K562 (cell line): ENCODE measurements at regions of chr20 and their contacts with region 1.

Region 1: DNA sequence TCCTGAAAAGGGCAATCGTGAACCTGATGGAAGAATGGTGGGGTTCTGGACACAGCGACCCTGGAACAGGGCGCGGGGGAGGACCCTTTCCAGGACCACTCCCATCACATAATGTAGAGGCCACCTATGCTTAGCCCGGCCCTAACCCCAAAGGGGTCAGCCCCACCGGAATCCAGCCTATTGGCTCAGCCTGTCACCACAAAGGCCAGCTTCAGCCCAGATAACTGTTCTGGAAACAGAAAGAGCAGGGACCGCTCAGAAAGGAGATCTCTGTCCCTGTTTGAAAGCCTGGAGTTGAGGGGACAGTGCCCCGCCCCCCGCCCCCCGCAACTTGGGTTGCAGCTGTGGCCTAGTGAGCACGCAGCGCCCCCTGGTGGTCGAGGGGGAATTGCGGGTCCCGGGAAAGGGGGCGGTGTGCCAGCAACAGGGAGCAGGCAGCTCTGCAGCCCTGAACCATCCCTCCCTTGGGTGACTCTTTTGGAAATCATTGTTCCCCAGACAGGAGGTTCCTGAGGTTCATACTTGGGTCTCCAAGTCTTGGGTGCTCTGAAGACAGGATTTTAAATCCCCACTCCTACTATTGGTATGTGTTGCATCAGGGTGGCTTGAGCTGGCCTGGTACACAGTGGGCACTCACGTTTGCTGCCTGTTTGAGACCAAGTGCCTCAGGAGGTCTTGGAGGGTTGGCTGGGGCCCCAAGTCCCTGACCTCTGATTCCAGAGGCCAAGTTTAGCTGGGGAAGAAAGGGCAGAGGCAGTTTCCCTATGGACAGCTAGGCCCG is 1.5 kb downstream of the SIGLEC1 start:
- DNase-seq: peak; percentile 73 to 82 (median 80)
- ATAC-seq: peak; percentile 86
- H3K4me3 ChIP-seq: no peak overlapping the region
- H3K27ac ChIP-seq: no peak overlapping the region
- H3K4me1 ChIP-seq: peaks cover 0 to 18% of the 10 kb centered on the region in 2 experiments; a peak in 2 of 5 replicates
- H3K27me3 ChIP-seq: no peaks in the 10 kb centered on the region
- CTCF ChIP-seq: peak; percentile 81 to 94 (median 83)
- EP300 ChIP-seq: no peak
- POLR2A ChIP-seq: no peak
- RAD21 ChIP-seq: peak; percentile 71 to 76

Region 2: DNA sequence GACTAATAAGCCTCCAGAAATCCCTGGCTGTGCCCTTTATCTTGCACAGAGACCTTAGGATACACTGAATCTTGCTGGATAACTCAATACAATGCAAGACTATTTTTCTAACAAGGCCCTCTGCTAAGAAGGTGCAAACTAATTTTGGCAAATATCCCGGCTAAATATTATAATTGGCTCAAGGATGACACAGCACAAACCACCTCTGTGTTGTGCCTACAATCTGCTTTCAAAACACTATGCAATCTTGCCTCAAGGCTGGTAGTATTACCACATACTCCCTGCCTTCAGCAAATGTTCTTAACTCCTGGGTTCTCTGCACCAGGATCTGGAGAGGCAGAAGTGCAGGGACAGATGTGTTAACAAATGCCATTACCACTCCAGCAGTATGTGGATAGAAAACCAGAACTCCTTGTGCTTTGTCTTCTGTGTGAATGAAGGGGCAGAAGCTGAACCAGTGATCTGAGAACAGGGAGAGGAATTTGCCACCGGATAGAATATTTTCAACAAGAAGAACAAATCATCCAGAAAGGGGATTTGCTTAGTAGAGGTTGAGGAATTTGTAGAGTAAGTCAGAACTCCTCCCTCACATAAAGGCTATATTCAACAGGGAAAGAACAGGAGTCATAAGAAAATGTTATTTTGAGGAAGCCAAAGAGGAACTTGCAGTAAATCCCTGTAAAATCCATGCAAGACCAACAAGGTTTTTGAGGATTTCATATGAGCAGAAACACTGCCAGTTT is 397.8 kb before region 1 on chr20:
- CTCF ChIA-PET with region 1: no interaction called
- POLR2A ChIA-PET with region 1: no interaction called
- in situ Hi-C with region 1: no loop called
- intact Hi-C with region 1: no loop called
- DNase-seq: no peak
- ATAC-seq: peak; percentile 54; the same call in 1 of the 3 replicates
- H3K4me3 ChIP-seq: no peak overlapping the region
- H3K27ac ChIP-seq: no peak overlapping the region
- H3K4me1 ChIP-seq: peaks cover 0 to 5% of the 10 kb centered on the region in 2 experiments; a peak in 3 of 5 replicates
- H3K27me3 ChIP-seq: no peaks in the 10 kb centered on the region
- CTCF ChIP-seq: no peak
- EP300 ChIP-seq: no peak
- POLR2A ChIP-seq: no peak
- RAD21 ChIP-seq: no peak

Region 3: DNA sequence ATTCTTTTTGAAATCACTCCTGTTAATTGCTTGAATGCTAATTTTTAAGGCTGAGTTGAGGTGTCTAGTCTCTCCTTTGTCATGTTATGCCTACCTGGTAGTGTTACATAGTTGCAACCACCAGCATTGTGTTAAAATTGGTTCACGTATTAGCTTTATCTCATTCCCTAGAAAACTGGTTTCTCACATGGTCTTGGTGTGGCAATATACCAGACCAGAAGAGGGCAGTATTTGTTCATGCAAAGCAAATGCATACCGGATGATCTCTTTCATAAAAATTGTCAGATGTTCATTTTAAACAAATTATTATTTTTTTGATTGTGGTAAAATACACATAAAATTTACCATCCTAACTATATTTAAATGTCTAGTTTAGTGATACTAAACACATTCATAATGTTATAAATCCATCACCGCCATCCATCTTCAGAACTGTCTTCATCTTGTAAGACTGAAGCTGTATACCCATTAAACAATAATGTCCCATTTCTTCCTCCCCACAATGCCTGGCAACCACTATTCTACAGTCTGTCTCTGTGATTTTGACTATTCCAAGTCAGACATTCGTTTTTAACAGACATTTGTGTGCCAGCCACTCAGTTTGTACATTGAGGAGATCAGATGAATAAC is 147.2 kb before region 1 on chr20:
- CTCF ChIA-PET with region 1: interaction called, 3 read pairs
- POLR2A ChIA-PET with region 1: no interaction called
- in situ Hi-C with region 1: loop called (anchors 5 kb)
- intact Hi-C with region 1: loop called (anchors 1 kb)
- DNase-seq: peak; percentile 15 to 50 (median 28)
- ATAC-seq: peak; percentile 73
- H3K4me3 ChIP-seq: no peak overlapping the region
- H3K27ac ChIP-seq: no peak overlapping the region
- H3K4me1 ChIP-seq: no peaks in the 10 kb centered on the region
- H3K27me3 ChIP-seq: no peaks in the 10 kb centered on the region
- CTCF ChIP-seq: peak; percentile 50 to 78 (median 56); a peak in 5 of 6 replicates
- EP300 ChIP-seq: no peak
- POLR2A ChIP-seq: no peak
- RAD21 ChIP-seq: peak; percentile 59 to 75

Region 4: DNA sequence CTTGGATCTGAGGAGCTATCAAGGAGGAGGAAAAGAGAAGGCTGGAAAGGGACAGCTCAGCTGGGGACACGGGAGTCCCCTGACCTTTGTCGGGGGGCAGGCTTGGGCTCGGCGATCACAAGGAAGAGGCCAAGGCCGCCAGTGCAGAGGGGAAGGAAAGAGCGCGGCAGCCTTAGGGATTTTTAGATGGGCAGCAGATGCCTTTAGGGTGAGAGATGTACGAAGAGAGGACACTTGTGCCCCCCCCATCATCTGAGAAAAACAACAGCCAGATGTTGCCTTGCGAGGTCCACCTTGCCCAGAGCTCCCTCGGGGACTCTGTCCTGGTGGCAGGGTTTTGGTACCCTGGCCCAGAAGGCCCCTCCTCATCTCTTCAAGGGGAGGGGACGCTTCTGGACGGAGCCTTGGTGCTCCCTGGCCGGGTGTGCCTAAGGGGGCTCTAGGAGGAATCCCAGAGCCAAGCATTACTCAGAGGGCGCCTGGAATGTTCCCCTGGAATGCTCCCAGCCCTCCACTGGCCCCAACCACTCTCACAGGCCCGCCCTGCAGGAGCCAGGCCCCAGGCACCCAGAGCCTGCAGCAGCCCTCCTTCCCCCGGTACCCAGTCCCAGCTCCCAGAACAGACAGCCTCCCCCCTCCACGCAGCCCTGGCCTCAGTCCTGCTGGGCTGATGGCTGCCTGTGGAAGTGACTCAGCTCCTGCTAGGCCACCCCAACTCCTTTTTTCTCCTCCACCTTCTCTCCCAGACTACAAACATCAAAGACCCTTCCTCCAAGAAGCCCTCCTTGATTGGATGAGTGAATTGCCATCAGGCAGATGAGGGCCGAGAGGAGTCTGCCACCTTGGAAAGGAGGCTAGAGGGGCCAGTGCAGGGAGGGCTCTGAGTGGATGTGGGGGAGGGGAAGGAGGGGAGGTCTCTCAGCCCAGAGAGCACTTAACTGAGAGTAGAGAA is 30.9 kb before region 1 on chr20:
- CTCF ChIA-PET with region 1: interaction called, 12 read pairs
- POLR2A ChIA-PET with region 1: interaction called, 4 read pairs
- in situ Hi-C with region 1: no loop called
- intact Hi-C with region 1: loop called (anchors 1 kb)
- DNase-seq: no peak
- ATAC-seq: no peak
- H3K4me3 ChIP-seq: no peak overlapping the region
- H3K27ac ChIP-seq: no peak overlapping the region
- H3K4me1 ChIP-seq: peaks cover 0 to 30% of the 10 kb centered on the region in 2 experiments; a peak in 2 of 5 replicates
- H3K27me3 ChIP-seq: peaks cover 0 to 6% of the 10 kb centered on the region in 2 experiments; a peak in 2 of 5 replicates
- CTCF ChIP-seq: no peak
- EP300 ChIP-seq: no peak
- POLR2A ChIP-seq: no peak
- RAD21 ChIP-seq: no peak

Region 5: DNA sequence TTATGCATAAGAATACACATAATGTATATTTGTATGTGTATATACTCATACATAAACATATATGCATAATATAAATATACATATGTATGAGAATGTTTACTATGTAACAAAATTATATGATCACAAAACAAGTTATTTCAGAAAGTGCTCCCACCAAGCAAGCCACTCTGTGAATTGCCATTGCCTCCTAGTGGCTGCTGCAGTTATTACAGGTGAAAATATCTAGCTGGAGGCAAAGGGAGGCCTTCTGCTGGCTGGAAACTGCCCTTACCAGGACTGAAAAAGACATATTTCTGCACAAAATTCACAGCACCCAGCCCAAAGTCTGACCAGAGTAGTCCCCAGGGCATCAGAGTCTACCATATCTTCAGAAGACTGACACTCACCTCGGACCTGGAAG is 14.7 kb before region 1 on chr20:
- CTCF ChIA-PET with region 1: no interaction called
- POLR2A ChIA-PET with region 1: no interaction called
- in situ Hi-C with region 1: no loop called
- intact Hi-C with region 1: no loop called
- DNase-seq: peak in 3 of 4 experiments; percentile 23 to 35 (median 33)
- ATAC-seq: no peak; the same call in 2 of the 3 replicates
- H3K4me3 ChIP-seq: no peak overlapping the region
- H3K27ac ChIP-seq: no peak overlapping the region
- H3K4me1 ChIP-seq: peaks cover 0 to 31% of the 10 kb centered on the region in 2 experiments; a peak in 2 of 5 replicates
- H3K27me3 ChIP-seq: peaks cover 0 to 27% of the 10 kb centered on the region in 2 experiments; a peak in 3 of 5 replicates
- CTCF ChIP-seq: peak; percentile 41 to 56 (median 41); a peak in 5 of 6 replicates
- EP300 ChIP-seq: no peak
- POLR2A ChIP-seq: no peak
- RAD21 ChIP-seq: no peak

Region 6: GRCh38 chr20:3795511-3796468 is 84.9 kb after region 1 on chr20 and contains the start of gene CDC25B:
- CTCF ChIA-PET with region 1: no interaction called
- POLR2A ChIA-PET with region 1: no interaction called
- in situ Hi-C with region 1: no loop called
- intact Hi-C with region 1: no loop called
- DNase-seq: peak; percentile 80 to 88 (median 86)
- ATAC-seq: peak; percentile 91
- H3K4me3 ChIP-seq: peak within 1 kb of the TSS; percentile 55
- H3K27ac ChIP-seq: peak within 1 kb of the TSS; percentile 73
- H3K4me1 ChIP-seq: peaks cover 14 to 37% of the 10 kb centered on the region in 2 experiments; a peak in 4 of 5 replicates
- H3K27me3 ChIP-seq: no peaks in the 10 kb centered on the region
- CTCF ChIP-seq: peak; percentile 12 to 40 (median 19); a peak in 2 of 6 replicates
- EP300 ChIP-seq: no peak
- POLR2A ChIP-seq: peak; percentile 66
- RAD21 ChIP-seq: no peak
- polyA plus RNA-seq, gene CDC25B: 2.3 to 3.1 TPM

Region 7: DNA sequence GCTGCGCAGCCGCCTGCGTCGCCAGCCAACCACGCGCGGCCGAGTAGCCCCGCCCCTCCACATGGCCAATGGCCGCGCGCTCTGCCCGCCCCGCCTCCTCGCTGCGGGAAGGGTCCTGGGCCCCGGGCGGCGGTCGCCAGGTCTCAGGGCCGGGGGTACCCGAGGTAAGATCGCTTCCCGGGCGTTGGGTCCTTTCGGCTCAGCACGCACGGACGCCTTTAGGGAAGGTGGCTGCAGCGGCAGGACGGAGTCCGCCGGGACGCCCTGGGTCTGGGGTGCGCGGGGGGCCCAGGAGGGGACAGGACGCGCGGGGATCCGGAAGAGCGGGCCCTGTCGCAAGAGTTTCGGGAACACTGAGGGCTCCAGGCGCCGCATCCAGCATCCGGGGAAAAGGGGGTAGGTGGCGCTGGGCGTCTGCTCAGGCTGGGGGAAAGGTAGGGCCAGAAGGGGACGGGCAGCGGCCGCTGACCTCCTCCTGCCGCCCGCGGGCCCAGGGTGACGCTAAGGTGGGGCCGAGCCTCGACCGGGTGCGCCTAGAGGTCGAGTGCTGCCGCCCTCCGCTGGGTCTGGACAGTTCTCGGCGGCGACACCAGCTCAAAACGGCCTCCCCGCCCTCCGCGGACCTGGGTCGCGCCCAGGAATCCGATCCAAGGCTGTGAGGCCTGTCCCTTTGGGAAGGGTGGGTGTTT is 136.0 kb after region 1 on chr20 and contains the start of gene MAVS:
- CTCF ChIA-PET with region 1: no interaction called
- POLR2A ChIA-PET with region 1: no interaction called
- in situ Hi-C with region 1: no loop called
- intact Hi-C with region 1: no loop called
- DNase-seq: peak; percentile 87 to 90 (median 88)
- ATAC-seq: peak; percentile 94
- H3K4me3 ChIP-seq: peak within 1 kb of the TSS; percentile 81
- H3K27ac ChIP-seq: peak within 1 kb of the TSS; percentile 88
- H3K4me1 ChIP-seq: peaks cover 33 to 44% of the 10 kb centered on the region in 2 experiments; a peak in 4 of 5 replicates
- H3K27me3 ChIP-seq: no peaks in the 10 kb centered on the region
- CTCF ChIP-seq: peak in 2 of 3 experiments; percentile 32 to 38; a peak in 3 of 6 replicates
- EP300 ChIP-seq: no peak
- POLR2A ChIP-seq: peak; percentile 84
- RAD21 ChIP-seq: peak; percentile 35 to 36
- polyA plus RNA-seq, gene MAVS: 1.6 to 1.8 TPM